A673 (cell line): ENCODE measurements at regions of chr4 and their contacts with region 1.

Region 1: GRCh38 chr4:151105454-151106032 is 6.1 kb downstream of the RPS3A start:
- DNase-seq: no peak
- H3K4me3 ChIP-seq: no peak overlapping the region
- H3K27ac ChIP-seq: no peak overlapping the region
- H3K4me1 ChIP-seq: peaks cover 6% of the 10 kb centered on the region
- H3K27me3 ChIP-seq: no peaks in the 10 kb centered on the region
- CTCF ChIP-seq: no peak

Region 2: GRCh38 chr4:150943818-150944217 is 161.7 kb before region 1 on chr4:
- CTCF ChIA-PET with region 1: no interaction called
- POLR2A ChIA-PET with region 1: interaction called, 11 read pairs
- intact Hi-C with region 1: no loop called
- DNase-seq: no peak
- H3K4me3 ChIP-seq: no peak overlapping the region
- H3K27ac ChIP-seq: no peak overlapping the region
- H3K4me1 ChIP-seq: peaks cover 9% of the 10 kb centered on the region
- H3K27me3 ChIP-seq: no peaks in the 10 kb centered on the region
- CTCF ChIP-seq: no peak

Region 3: DNA sequence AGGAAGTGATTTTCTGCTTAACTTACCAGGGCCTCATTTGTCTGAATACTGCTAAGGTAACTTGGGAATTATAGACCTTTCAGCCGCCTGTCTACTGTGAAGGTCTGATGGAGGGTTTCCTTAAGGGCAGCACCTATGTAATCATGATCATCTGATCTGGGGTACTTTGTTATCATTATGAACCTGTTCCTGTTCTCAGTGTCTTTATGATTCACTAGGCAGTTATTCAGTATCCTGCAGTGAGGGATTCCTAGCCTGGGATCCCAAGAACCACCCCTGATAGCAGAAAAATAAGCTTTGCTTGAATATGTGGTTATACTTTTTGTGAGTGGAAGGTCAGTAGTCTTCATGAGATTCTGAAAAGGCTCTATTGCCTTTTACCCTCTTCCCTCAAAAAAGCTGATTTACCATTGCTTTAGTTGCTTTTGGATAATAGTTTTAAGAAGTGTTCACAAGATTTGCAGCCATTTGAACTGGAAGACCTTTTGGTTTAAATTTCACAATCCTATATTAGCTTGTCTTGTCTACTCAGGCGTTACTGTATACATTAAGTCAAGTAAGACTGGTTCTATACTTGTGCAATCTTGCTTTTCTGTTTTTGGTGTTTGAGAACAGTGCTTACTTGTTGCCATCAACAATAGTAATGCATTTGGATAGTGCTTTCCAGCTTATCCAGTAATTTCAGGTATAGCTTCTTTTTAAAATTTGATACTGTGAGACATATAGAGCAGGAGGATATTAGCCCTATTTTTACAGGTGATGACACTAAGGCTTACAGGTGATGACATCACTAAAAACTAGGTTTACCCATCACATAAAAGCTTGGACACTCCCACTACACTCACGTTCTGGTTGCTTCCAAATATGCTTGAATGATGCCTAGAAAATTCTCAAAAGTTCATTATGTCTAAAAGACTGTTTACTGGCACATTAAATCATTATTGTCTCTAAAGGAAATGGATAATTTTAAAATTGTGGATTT is 363.5 kb after region 1 on chr4:
- CTCF ChIA-PET with region 1: no interaction called
- POLR2A ChIA-PET with region 1: no interaction called
- intact Hi-C with region 1: no loop called
- DNase-seq: no peak
- H3K4me3 ChIP-seq: no peak overlapping the region
- H3K27ac ChIP-seq: no peak overlapping the region
- H3K4me1 ChIP-seq: no peaks in the 10 kb centered on the region
- H3K27me3 ChIP-seq: no peaks in the 10 kb centered on the region
- CTCF ChIP-seq: no peak